GM13976 (cell line): ENCODE measurements at regions of chr16 and their contacts with region 1.

Region 1: GRCh38 chr16:75218256-75219070 is at the start of gene CTRB1:
- DNase-seq: peak; percentile 66
- CTCF ChIP-seq: no peak

Region 2: GRCh38 chr16:74650966-74651567 is 567.4 kb before region 1 on chr16:
- in situ Hi-C with region 1: no loop called
- DNase-seq: no peak
- CTCF ChIP-seq: no peak

Region 3: DNA sequence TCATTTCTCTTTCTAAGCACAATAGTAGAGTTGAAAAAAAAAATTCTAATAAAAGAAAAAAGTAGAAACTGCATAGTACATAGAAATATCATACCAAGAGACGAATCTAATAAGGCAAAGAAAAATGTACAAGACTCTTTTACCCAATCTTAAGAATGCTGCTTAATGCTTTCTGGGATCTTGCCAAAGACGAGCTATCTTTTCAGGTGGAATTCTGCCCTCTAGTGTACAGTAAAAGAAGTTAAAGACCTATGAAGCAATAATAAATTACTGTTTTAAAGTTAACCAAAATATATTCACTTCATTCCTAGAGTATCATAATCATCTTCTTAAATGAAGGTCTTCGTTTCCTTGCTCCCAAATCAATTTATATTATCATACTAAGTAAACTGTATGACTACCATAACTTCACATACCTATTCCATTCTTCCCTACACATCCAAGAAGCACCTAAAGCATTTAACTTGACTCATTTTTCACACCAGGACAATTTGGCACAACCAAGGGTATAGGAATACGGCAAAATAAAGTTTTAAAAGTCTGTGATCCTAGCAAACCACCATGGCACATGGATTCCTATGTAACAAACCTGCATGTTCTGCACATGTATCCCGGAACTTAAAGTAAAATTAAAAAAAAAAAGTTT is 167.2 kb after region 1 on chr16:
- in situ Hi-C with region 1: loop called (anchors 10 kb)
- DNase-seq: peak; percentile 61
- CTCF ChIP-seq: peak; percentile 20